ENCODE measurements at regions of chr20 and their contacts with region 1.

Region 1: GRCh38 chr20:1664911-1665310 is 7.3 kb upstream of the SIRPG start:
- DNase-seq: peak; percentile 19
- ATAC-seq: peak; percentile 65
- H3K4me3 ChIP-seq: no peak overlapping the region
- H3K27ac ChIP-seq: no peak overlapping the region
- H3K4me1 ChIP-seq: peaks cover 26% of the 10 kb centered on the region
- H3K27me3 ChIP-seq: no peaks in the 10 kb centered on the region
- CTCF ChIP-seq: no peak
- EP300 ChIP-seq: 0 out of 4 replicates have a peak, but pooled peaks of 1 of the 2 experiments have one; percentile 42
- POLR2A ChIP-seq: no peak
- RAD21 ChIP-seq: no peak; the same call in 1 of the 2 replicates

Region 2: GRCh38 chr20:1392823-1393506 is 271.9 kb before region 1 on chr20 and contains the start of gene FKBP1A:
- CTCF ChIA-PET with region 1: no interaction called
- POLR2A ChIA-PET with region 1: no interaction called
- RAD21 ChIA-PET with region 1: no interaction called
- SMC1A ChIA-PET with region 1: no interaction called
- in situ Hi-C with region 1: no loop called
- intact Hi-C with region 1: no loop called
- DNase-seq: peak; percentile 67
- ATAC-seq: peak; percentile 87
- H3K4me3 ChIP-seq: peak within 1 kb of the TSS; percentile 99
- H3K27ac ChIP-seq: peak within 1 kb of the TSS; percentile 67
- H3K4me1 ChIP-seq: peaks cover 10% of the 10 kb centered on the region
- H3K27me3 ChIP-seq: no peaks in the 10 kb centered on the region; a peak in 2 of 4 replicates
- CTCF ChIP-seq: peak in 2 of 3 experiments; percentile 7 to 8; a peak in 1 of 6 replicates
- EP300 ChIP-seq: peak in 1 of 2 experiments; percentile 43; a peak in 1 of 4 replicates
- POLR2A ChIP-seq: peak; percentile 91
- RAD21 ChIP-seq: no peak
- polyA plus RNA-seq, gene FKBP1A: 150 to 166 TPM

Region 3: GRCh38 chr20:1674990-1675780 is 10.3 kb after region 1 on chr20:
- CTCF ChIA-PET with region 1: no interaction called
- POLR2A ChIA-PET with region 1: interaction called, 4 read pairs
- RAD21 ChIA-PET with region 1: no interaction called
- SMC1A ChIA-PET with region 1: interaction called, 24 read pairs
- in situ Hi-C with region 1: no loop called
- intact Hi-C with region 1: no loop called
- DNase-seq: no peak
- ATAC-seq: no peak
- H3K4me3 ChIP-seq: no peak overlapping the region
- H3K27ac ChIP-seq: no peak overlapping the region
- H3K4me1 ChIP-seq: 0 out of 2 replicates have a peak, but pooled peaks cover 4% of the 10 kb centered on the region
- H3K27me3 ChIP-seq: peaks cover 0 to 2% of the 10 kb centered on the region in 2 experiments; a peak in 1 of 4 replicates
- CTCF ChIP-seq: no peak
- EP300 ChIP-seq: no peak
- POLR2A ChIP-seq: no peak
- RAD21 ChIP-seq: no peak

Region 4: DNA sequence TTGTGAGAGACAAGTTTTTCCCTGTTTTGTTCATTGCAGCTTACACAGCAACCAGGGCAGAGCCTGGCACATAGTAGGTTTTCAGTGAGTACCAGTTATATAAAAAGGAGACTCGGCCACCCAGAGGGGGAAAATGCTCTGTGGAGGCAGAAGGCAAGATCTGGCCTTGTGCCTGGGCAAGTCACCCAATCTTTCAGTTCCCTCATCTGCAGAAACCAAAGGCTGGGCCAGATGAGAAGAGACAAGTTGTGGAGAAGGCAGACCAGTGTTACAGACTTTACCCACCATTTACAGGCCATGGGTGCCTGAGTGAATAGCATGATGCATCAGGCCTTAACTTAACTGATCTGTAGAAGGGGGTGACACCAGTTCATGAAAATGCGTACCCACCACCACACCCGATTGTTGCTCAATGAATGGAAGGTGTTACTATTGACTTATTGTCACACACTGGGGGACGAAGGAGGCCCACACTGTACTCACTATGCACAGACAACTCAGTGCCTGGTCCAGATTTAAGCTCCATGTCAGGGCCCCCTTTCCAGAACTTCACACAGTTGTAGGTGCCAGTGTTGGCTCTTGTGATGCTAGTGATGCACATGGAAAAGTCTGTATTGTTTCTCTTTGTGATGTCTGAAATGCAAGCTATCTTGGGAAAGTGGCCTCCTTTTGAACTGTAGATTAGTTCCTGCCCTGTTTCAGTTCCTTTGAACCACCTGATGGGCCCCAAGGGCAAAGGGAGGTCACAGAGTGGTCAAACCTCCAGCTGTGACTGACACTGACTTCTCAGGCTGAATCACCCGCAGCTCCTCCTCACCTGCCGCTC is 57.0 kb after region 1 on chr20:
- CTCF ChIA-PET with region 1: interaction called, 3 read pairs
- POLR2A ChIA-PET with region 1: no interaction called
- RAD21 ChIA-PET with region 1: interaction called, 3 read pairs
- SMC1A ChIA-PET with region 1: interaction called, 4 read pairs
- in situ Hi-C with region 1: no loop called
- intact Hi-C with region 1: loop called (anchors 2 kb)
- DNase-seq: no peak
- ATAC-seq: peak; percentile 92
- H3K4me3 ChIP-seq: no peak overlapping the region
- H3K27ac ChIP-seq: peak overlapping the region; percentile 63
- H3K4me1 ChIP-seq: peaks cover 23% of the 10 kb centered on the region
- H3K27me3 ChIP-seq: no peaks in the 10 kb centered on the region
- CTCF ChIP-seq: no peak
- EP300 ChIP-seq: peak in 1 of 2 experiments; percentile 59; a peak in 1 of 4 replicates
- POLR2A ChIP-seq: no peak
- RAD21 ChIP-seq: peak; percentile 18; the same call in 1 of the 2 replicates

Measured in GM12878 (cell line).